ENCODE measurements at regions of chr2 and their contacts with region 1.

Region 1: DNA sequence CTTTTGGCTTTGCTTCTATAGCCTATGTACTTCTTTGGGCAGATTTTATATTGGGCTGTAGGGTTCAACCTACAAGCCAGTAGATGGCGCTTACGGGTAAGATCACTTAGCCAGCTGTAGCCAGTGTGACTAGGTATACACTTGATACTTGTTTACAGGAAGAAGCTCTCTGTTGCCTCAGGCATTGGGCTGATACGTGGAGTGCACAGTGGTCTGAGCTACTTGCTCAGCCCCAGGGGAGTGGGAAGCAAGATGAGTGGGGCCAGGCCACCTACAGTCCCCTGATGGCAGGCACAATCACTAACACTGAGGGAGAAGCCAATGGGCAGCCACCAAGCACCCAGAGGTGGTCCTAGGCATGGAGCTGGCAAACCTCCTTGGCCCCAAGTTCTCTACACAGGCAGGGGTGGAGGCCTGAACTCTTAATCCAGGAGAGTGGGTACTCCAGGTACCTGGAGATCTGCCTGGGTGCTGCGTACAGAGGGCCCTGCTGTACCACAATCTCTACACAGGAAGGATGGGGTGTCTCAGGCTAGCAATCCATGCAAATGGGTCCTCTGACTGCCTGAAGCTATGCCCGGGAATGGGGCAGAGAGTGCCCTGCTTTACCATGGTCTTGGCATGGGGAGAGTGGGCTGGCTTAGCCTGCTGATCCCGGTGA is 122.2 kb downstream of the NCOA1 start:
- DNase-seq: peak; percentile 77
- H3K4me3 ChIP-seq: no peak overlapping the region
- H3K27ac ChIP-seq: no peak overlapping the region
- H3K4me1 ChIP-seq: no peaks in the 10 kb centered on the region
- H3K27me3 ChIP-seq: no peaks in the 10 kb centered on the region

Region 2: GRCh38 chr2:24771764-24772586 is 158.7 kb after region 1 on chr2:
- in situ Hi-C with region 1: loop called (anchors 10 kb)
- DNase-seq: no peak
- H3K4me3 ChIP-seq: no peak overlapping the region
- H3K27ac ChIP-seq: no peak overlapping the region
- H3K4me1 ChIP-seq: no peaks in the 10 kb centered on the region
- H3K27me3 ChIP-seq: no peaks in the 10 kb centered on the region

Region 3: GRCh38 chr2:25309402-25309801 is 696.1 kb after region 1 on chr2:
- in situ Hi-C with region 1: no loop called
- DNase-seq: peak; percentile 54
- H3K4me3 ChIP-seq: no peak overlapping the region
- H3K27ac ChIP-seq: no peak overlapping the region
- H3K4me1 ChIP-seq: no peaks in the 10 kb centered on the region
- H3K27me3 ChIP-seq: no peaks in the 10 kb centered on the region